IMR-90 (cell line): ENCODE measurements at regions of chr1 and their contacts with region 1.

Region 1: GRCh38 chr1:55506686-55507577 is 291.8 kb upstream of the USP24 start:
- DNase-seq: peak; percentile 63
- ATAC-seq: peak; percentile 51
- H3K4me3 ChIP-seq: no peak overlapping the region
- H3K27ac ChIP-seq: peak overlapping the region; percentile 89
- H3K4me1 ChIP-seq: peaks cover 30% of the 10 kb centered on the region
- H3K27me3 ChIP-seq: no peaks in the 10 kb centered on the region
- CTCF ChIP-seq: peak; percentile 31; the same call in 1 of the 2 replicates
- POLR2A ChIP-seq: no peak
- RAD21 ChIP-seq: peak; percentile 37

Region 2: GRCh38 chr1:55375617-55376258 is 131.2 kb before region 1 on chr1:
- CTCF ChIA-PET with region 1: interaction called, 3 read pairs
- POLR2A ChIA-PET with region 1: no interaction called
- dilution Hi-C with region 1: no loop called
- in situ Hi-C with region 1: no loop called
- intact Hi-C with region 1: loop called (anchors 5 kb)
- DNase-seq: peak; percentile 47
- ATAC-seq: peak; percentile 68; the same call in 1 of the 2 replicates
- H3K4me3 ChIP-seq: no peak overlapping the region
- H3K27ac ChIP-seq: 0 out of 2 replicates have a peak overlapping the region, but pooled peaks have one; percentile 4
- H3K4me1 ChIP-seq: peaks cover 13% of the 10 kb centered on the region
- H3K27me3 ChIP-seq: no peaks in the 10 kb centered on the region
- CTCF ChIP-seq: peak; percentile 79
- POLR2A ChIP-seq: no peak
- RAD21 ChIP-seq: peak; percentile 76

Region 3: GRCh38 chr1:55534481-55535149 is 27.7 kb after region 1 on chr1:
- CTCF ChIA-PET with region 1: no interaction called
- POLR2A ChIA-PET with region 1: no interaction called
- dilution Hi-C with region 1: no loop called
- in situ Hi-C with region 1: no loop called
- intact Hi-C with region 1: no loop called
- DNase-seq: no peak
- ATAC-seq: no peak
- H3K4me3 ChIP-seq: no peak overlapping the region
- H3K27ac ChIP-seq: no peak overlapping the region
- H3K4me1 ChIP-seq: 0 out of 2 replicates have a peak, but pooled peaks cover 2% of the 10 kb centered on the region
- H3K27me3 ChIP-seq: no peaks in the 10 kb centered on the region
- CTCF ChIP-seq: no peak
- POLR2A ChIP-seq: no peak
- RAD21 ChIP-seq: no peak

Region 4: DNA sequence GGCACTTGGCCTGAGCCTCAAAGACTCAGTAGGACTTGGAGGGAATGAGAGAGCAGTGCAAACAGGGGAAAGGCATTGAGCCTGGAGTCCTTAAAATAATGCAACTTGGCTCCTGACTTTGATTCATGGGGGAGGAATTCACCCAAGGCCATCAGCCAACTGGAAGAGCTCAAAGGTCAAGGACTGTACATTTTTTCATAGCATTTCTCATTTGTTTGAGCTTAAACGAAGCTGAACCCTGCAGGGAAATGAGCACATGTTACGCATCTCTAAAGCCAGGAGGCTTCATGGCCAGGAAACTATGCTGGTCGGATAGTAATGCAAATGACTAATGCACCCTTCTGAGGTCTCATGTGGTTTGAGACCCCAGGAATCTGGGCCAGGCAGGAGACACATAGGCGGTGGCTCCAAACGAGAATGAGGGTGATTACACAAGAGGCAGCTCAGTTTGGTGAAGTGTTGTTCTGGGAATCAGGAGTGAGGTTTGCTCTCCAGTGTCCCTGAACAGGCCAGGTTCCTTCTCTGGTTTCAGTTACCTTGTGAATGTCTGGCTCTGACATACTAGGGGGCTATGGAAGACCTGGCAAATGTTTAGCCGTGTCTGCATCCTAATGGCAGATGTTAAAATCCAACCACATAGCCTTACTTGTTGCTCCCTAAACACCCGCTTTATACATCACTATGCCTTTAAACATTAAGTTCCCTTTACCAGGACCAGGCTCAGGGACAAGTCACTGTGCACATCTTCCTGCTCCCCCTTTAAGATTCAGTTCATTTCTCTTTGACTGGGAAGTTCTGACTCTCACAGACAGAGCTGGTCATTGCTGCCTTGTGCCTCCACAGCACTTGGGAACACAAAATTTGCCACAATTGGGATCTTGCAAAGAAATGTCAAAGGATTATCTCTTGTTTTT is 212.1 kb after region 1 on chr1:
- CTCF ChIA-PET with region 1: no interaction called
- POLR2A ChIA-PET with region 1: no interaction called
- dilution Hi-C with region 1: no loop called
- in situ Hi-C with region 1: no loop called
- intact Hi-C with region 1: loop called (anchors 5 kb)
- DNase-seq: peak; percentile 100
- ATAC-seq: peak; percentile 75
- H3K4me3 ChIP-seq: no peak overlapping the region
- H3K27ac ChIP-seq: peak overlapping the region; percentile 97
- H3K4me1 ChIP-seq: peaks cover 31% of the 10 kb centered on the region
- H3K27me3 ChIP-seq: no peaks in the 10 kb centered on the region
- CTCF ChIP-seq: no peak
- POLR2A ChIP-seq: peak; percentile 54; the same call in 1 of the 2 replicates
- RAD21 ChIP-seq: peak; percentile 38

Region 5: GRCh38 chr1:56064705-56065104 is 557.8 kb after region 1 on chr1:
- CTCF ChIA-PET with region 1: no interaction called
- POLR2A ChIA-PET with region 1: no interaction called
- dilution Hi-C with region 1: no loop called
- in situ Hi-C with region 1: no loop called
- intact Hi-C with region 1: loop called (anchors 10 kb)
- DNase-seq: peak; percentile 61
- ATAC-seq: no peak; the same call in 1 of the 2 replicates
- H3K4me3 ChIP-seq: no peak overlapping the region
- H3K27ac ChIP-seq: no peak overlapping the region
- H3K4me1 ChIP-seq: peaks cover 11% of the 10 kb centered on the region
- H3K27me3 ChIP-seq: no peaks in the 10 kb centered on the region
- CTCF ChIP-seq: no peak
- POLR2A ChIP-seq: no peak
- RAD21 ChIP-seq: no peak

Region 6: GRCh38 chr1:56821140-56821797 is 1314.3 kb after region 1 on chr1:
- CTCF ChIA-PET with region 1: no interaction called
- POLR2A ChIA-PET with region 1: no interaction called
- dilution Hi-C with region 1: no loop called
- in situ Hi-C with region 1: loop called (anchors 25 kb)
- intact Hi-C with region 1: no loop called
- DNase-seq: peak; percentile 79
- ATAC-seq: peak; percentile 93
- H3K4me3 ChIP-seq: no peak overlapping the region
- H3K27ac ChIP-seq: no peak overlapping the region
- H3K4me1 ChIP-seq: peaks cover 13% of the 10 kb centered on the region
- H3K27me3 ChIP-seq: no peaks in the 10 kb centered on the region
- CTCF ChIP-seq: peak; percentile 95
- POLR2A ChIP-seq: no peak
- RAD21 ChIP-seq: peak; percentile 91